MCF 10A (cell line): ENCODE measurements at regions of chr11 and their contacts with region 1.

Region 1: GRCh38 chr11:8231979-8232378 is 31.7 kb downstream of the LMO1 start:
- DNase-seq: no peak
- H3K4me3 Mint-ChIP-seq: no peak overlapping the region
- H3K27ac Mint-ChIP-seq: no peak overlapping the region
- H3K4me1 Mint-ChIP-seq: peaks cover 32% of the 10 kb centered on the region
- H3K27me3 Mint-ChIP-seq: no peaks in the 10 kb centered on the region
- CTCF ChIP-seq: no peak

Region 2: DNA sequence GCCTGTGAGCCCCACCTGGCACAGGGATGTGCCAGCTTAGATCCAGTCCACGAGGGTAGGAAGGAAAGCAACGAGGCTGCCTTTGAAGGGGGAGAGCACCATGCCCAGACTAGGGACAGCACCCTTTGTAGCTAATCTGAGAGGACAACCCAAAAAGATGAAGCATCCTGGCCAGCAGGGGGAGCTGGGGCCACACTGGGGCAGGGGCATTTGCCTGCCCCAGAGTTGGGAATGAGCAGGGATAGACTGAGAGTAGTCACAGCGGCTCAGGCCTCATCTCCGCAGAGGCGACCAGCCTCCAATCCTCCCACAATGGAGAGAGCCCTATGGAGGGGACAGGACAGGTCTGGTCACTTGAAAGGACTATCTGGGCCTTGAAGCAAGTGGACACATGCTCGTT is 15.3 kb after region 1 on chr11:
- CTCF ChIA-PET with region 1: interaction called, 10 read pairs
- POLR2A ChIA-PET with region 1: interaction called, 3 read pairs
- intact Hi-C with region 1: no loop called
- DNase-seq: peak; percentile 41
- H3K4me3 Mint-ChIP-seq: no peak overlapping the region
- H3K27ac Mint-ChIP-seq: no peak overlapping the region
- H3K4me1 Mint-ChIP-seq: no peaks in the 10 kb centered on the region
- H3K27me3 Mint-ChIP-seq: peaks cover 4% of the 10 kb centered on the region
- CTCF ChIP-seq: peak; percentile 54